ENCODE measurements at regions of chr4 and their contacts with region 1.

Region 1: GRCh38 chr4:155787113-155787710 is 28.4 kb downstream of the GUCY1B1 start:
- DNase-seq: peak; percentile 70
- ATAC-seq: peak; percentile 96
- H3K4me3 ChIP-seq: no peak overlapping the region
- H3K27ac ChIP-seq: no peak overlapping the region
- H3K4me1 ChIP-seq: peaks cover 2% of the 10 kb centered on the region; the same call in 1 of the 2 replicates
- H3K27me3 ChIP-seq: no peaks in the 10 kb centered on the region
- CTCF ChIP-seq: peak; percentile 93
- POLR2A ChIP-seq: 0 out of 2 replicates have a peak, but pooled peaks have one; percentile 46
- RAD21 ChIP-seq: peak; percentile 93

Region 2: GRCh38 chr4:154822775-154823174 is 964.4 kb before region 1 on chr4:
- CTCF ChIA-PET with region 1: no interaction called
- POLR2A ChIA-PET with region 1: no interaction called
- dilution Hi-C with region 1: no loop called
- in situ Hi-C with region 1: loop called (anchors 25 kb)
- intact Hi-C with region 1: loop called (anchors 10 kb)
- DNase-seq: peak; percentile 84
- ATAC-seq: peak; percentile 88
- H3K4me3 ChIP-seq: no peak overlapping the region
- H3K27ac ChIP-seq: peak overlapping the region; percentile 59; the same call in 1 of the 2 replicates
- H3K4me1 ChIP-seq: no peaks in the 10 kb centered on the region
- H3K27me3 ChIP-seq: no peaks in the 10 kb centered on the region
- CTCF ChIP-seq: no peak
- POLR2A ChIP-seq: no peak
- RAD21 ChIP-seq: no peak

Region 3: DNA sequence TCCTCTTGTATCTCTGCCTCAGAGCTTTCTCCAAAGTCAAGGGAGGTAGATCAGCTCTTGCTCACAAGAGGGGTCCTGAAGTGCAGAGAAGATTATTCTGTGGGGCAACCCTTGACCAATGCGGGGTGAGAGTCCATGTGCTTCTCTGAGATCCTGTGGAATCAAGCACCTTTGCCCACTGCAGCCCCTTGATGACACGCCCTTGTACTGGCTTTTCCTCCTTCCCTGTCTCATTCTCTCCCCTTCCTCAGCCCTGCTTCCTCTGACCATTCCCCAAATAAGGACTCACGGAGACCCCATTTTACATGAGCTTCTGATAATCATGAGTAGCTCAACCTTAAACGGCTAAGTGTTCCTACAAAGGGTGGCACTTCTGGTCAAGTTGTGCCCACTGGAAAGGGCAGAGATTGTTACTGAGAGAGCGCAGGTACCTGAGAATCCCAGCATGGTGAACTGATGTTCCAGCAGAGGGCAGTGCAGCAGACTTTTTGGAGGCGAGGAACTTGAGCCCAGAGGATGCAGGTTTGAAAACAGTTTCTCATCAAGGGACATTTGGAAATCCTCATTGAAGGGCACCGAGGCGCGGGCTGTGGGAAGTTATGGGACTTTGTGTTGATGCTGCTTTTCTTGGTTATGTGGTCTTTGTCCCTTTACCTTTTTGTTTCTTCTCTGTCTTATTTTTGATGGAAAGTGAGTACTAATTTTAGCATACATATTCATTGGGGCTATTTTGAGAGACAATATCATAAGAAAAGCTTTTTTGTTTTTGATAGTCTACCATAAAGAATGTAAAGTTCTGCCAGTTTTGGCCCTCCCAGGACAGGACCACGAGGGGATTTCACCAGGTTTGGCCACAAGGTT is 804.8 kb before region 1 on chr4:
- CTCF ChIA-PET with region 1: interaction called, 3 read pairs
- POLR2A ChIA-PET with region 1: no interaction called
- dilution Hi-C with region 1: no loop called
- in situ Hi-C with region 1: loop called (anchors 25 kb)
- intact Hi-C with region 1: loop called (anchors 10 kb)
- DNase-seq: peak; percentile 48
- ATAC-seq: peak; percentile 69
- H3K4me3 ChIP-seq: no peak overlapping the region
- H3K27ac ChIP-seq: no peak overlapping the region
- H3K4me1 ChIP-seq: no peaks in the 10 kb centered on the region
- H3K27me3 ChIP-seq: no peaks in the 10 kb centered on the region
- CTCF ChIP-seq: peak; percentile 58
- POLR2A ChIP-seq: no peak
- RAD21 ChIP-seq: peak; percentile 60

Region 4: DNA sequence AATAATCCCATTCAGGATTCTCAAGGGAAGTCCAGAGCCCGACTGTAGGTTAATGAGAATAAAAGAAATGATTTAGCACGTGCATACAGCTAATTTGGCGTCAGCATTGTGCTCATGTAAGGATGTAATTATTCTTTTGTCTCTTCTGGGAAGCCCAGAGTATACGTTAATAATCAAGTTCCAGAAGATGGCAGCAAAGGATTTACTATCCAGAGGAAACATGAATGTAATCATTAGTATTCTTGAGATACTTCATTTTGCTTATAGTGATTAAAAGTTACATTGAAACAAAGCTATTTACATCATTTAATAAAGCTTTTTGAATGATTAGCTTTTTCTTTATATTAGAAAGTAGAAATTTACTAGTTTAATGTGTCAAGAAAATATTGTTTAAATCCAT is 383.3 kb before region 1 on chr4:
- CTCF ChIA-PET with region 1: interaction called, 6 read pairs
- POLR2A ChIA-PET with region 1: no interaction called
- dilution Hi-C with region 1: no loop called
- in situ Hi-C with region 1: loop called (anchors 5 kb)
- intact Hi-C with region 1: loop called (anchors 1 kb)
- DNase-seq: peak; percentile 72
- ATAC-seq: peak; percentile 84
- H3K4me3 ChIP-seq: no peak overlapping the region
- H3K27ac ChIP-seq: no peak overlapping the region
- H3K4me1 ChIP-seq: no peaks in the 10 kb centered on the region; the same call in 1 of the 2 replicates
- H3K27me3 ChIP-seq: no peaks in the 10 kb centered on the region
- CTCF ChIP-seq: peak; percentile 72
- POLR2A ChIP-seq: no peak
- RAD21 ChIP-seq: peak; percentile 80

Region 5: DNA sequence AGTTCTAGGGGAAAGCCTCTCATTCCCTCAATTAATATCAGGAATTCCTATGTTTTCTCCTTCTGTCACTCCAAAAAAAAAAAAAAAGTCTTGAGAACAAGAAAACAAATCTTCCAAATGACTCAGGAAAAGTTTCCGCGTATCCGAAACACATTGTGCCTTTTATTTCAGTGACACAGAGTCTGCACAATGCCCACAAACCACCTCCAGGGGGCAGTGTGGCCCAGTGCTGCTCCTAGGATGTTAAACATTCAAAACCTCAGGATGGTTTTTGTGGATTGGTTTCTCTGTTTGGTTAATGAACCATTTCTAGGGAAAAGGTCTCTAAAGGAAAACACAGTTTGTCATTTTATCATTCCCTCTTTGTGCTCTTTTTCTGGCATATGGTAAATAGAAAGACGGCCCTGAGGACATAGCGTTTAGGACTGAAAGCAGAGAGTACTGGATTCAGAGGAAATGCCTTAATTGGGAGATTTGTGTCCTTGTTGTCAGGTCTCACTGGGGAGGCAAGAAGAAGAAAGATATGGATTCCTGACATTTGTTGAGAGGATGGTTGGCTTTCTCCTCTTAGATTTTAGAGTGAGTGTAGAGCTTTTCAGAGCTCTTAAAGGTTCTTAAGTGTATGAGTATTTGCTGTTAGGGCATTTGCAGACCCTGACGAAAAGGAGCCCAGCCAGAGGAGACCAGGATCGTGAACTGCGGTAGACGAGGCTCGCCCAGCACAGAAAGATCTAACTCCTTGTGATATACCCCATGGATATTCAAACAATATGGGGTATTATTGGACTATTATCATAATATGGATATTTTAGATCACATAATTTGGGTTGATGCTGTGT is 344.7 kb before region 1 on chr4:
- CTCF ChIA-PET with region 1: interaction called, 4 read pairs
- POLR2A ChIA-PET with region 1: no interaction called
- dilution Hi-C with region 1: no loop called
- in situ Hi-C with region 1: loop called (anchors 10 kb)
- intact Hi-C with region 1: loop called (anchors 1 kb)
- DNase-seq: peak; percentile 76
- ATAC-seq: peak; percentile 94
- H3K4me3 ChIP-seq: no peak overlapping the region
- H3K27ac ChIP-seq: peak overlapping the region; percentile 48; the same call in 1 of the 2 replicates
- H3K4me1 ChIP-seq: peaks cover 2% of the 10 kb centered on the region; the same call in 1 of the 2 replicates
- H3K27me3 ChIP-seq: no peaks in the 10 kb centered on the region
- CTCF ChIP-seq: peak; percentile 92
- POLR2A ChIP-seq: no peak
- RAD21 ChIP-seq: peak; percentile 92

Measured in IMR-90 (cell line).